Activated CD8-positive, alpha-beta memory T cell treated with anti-CD3 and anti-CD28 coated beads, Interleukin-2, amount 10 ng/mL, durations not matched to agents 7 days and 5 days (primary cell): ENCODE measurements at regions of chr15 and their contacts with region 1.

Region 1: DNA sequence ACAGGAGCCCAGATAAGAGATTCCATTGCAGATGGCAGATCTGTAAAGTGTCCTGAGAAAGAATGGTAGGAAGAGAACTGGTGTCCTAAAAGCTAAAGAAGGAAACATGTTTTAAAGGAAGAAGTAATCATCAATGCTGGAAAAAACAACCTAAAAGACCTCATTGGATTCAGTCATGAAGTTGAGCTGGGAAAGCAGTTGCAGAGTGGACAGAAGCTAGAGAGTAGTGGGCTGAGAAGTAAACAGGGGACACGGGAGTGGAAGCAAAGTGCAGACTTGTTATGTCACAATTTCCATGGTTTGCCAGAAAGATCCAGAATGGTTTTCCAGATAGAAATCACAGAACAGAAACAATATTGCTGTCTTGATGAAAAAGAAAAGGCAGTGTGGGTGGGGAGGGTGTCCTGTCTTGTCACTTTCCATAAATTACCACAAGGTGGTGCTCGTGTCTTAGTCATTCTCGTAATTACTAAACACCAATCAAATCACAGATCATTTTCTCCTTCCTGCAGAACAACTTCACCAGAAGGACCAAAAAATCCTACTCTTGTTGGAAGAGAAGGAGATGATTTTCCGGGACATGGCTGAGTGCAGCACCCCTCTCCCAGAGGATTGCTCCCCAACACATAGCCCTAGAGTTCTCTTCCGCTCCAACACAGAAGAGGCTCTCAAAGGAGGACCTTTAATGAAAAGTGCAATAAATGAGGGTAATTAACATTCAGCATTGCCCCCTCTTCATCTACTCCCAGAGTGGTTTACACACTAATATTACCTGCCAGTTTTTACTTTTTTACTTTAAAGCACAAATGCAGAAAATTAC is 64.5 kb downstream of the KLHL25 start:
- DNase-seq: peak; percentile 56
- ATAC-seq: peak; percentile 88
- H3K4me3 Mint-ChIP-seq: no peak overlapping the region
- H3K27ac Mint-ChIP-seq: peak overlapping the region; percentile 61
- H3K4me1 Mint-ChIP-seq: peaks cover 11% of the 10 kb centered on the region
- H3K27me3 Mint-ChIP-seq: no peaks in the 10 kb centered on the region

Region 2: GRCh38 chr15:85718981-85719380 is 11.2 kb before region 1 on chr15:
- CTCF ChIA-PET with region 1: interaction called, 12 read pairs
- DNase-seq: no peak
- ATAC-seq: no peak
- H3K4me3 Mint-ChIP-seq: no peak overlapping the region
- H3K27ac Mint-ChIP-seq: no peak overlapping the region
- H3K4me1 Mint-ChIP-seq: peaks cover 30% of the 10 kb centered on the region
- H3K27me3 Mint-ChIP-seq: no peaks in the 10 kb centered on the region

Region 3: GRCh38 chr15:85831415-85832113 is 101.4 kb after region 1 on chr15:
- CTCF ChIA-PET with region 1: interaction called, 12 read pairs
- DNase-seq: no peak
- ATAC-seq: no peak
- H3K4me3 Mint-ChIP-seq: no peak overlapping the region
- H3K27ac Mint-ChIP-seq: no peak overlapping the region
- H3K4me1 Mint-ChIP-seq: peaks cover 6% of the 10 kb centered on the region
- H3K27me3 Mint-ChIP-seq: peaks cover 10% of the 10 kb centered on the region

Region 4: DNA sequence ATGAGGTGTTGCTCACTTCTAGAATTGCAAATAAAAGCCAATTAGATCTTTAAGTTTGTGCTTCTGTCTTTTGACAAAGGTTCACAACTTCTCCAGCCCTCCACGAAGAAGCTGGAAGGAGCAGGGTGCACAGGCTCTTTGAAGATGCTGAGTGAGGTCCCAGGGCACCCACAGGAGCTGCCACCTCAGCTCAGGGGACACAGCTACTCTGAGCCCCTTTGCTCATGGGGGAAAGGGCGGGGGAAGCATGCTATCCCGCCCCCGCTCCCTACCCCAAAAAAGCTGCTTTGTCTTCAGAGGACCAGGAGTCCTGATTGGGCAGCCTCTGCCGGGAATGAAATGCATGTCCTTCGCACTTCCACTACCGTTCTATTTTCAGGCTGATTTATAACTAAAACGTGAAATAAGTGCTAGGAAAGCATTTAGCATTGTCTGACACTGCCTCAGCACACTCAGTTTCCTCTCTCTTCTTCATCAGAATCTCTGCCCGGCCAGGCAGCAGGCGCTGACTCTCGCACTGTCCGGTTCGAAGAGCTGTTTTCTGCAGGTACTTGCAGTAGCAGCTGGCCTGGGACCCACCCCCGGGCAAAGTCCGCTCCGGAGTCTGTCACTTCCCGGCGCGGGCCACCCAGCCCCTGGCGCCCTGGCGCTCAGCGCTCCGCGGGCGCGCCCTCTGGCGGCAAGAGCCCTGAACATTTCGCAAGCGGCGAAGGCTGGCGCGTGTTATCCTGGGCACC is 110.0 kb after region 1 on chr15:
- CTCF ChIA-PET with region 1: interaction called, 43 read pairs
- DNase-seq: peak; percentile 83
- ATAC-seq: peak; percentile 99
- H3K4me3 Mint-ChIP-seq: peak overlapping the region; percentile 59
- H3K27ac Mint-ChIP-seq: no peak overlapping the region
- H3K4me1 Mint-ChIP-seq: no peaks in the 10 kb centered on the region
- H3K27me3 Mint-ChIP-seq: peaks cover 9% of the 10 kb centered on the region